Panc1 (cell line): ENCODE measurements at regions of chr10 and their contacts with region 1.

Region 1: GRCh38 chr10:11866199-11866925 is 43.2 kb downstream of the PROSER2 start:
- DNase-seq: no peak
- ATAC-seq: no peak
- H3K4me3 ChIP-seq: no peak overlapping the region
- H3K27ac ChIP-seq: no peak overlapping the region
- H3K4me1 ChIP-seq: no peaks in the 10 kb centered on the region
- H3K27me3 ChIP-seq: no peaks in the 10 kb centered on the region
- CTCF ChIP-seq: no peak

Region 2: DNA sequence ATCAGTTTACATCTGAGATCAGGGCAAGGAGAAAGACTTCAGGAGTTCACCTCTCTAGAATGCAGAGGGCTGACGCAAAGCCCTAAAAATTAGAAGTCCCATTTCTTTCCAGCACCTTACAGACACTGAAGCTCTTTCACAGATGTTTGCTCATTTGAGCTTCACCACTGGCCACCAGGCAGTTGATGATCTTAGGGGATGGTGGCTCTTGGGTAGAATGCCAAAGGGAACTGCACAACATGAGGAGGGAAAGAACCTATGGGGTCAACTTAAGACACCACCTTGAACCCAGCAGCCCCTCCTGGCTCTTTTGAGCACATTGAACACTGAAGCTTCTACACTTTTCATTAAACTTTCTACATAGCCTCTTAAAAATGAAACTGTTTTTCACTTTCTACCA is 1238.9 kb before region 1 on chr10:
- CTCF ChIA-PET with region 1: no interaction called
- POLR2A ChIA-PET with region 1: interaction called, 12 read pairs
- in situ Hi-C with region 1: no loop called
- intact Hi-C with region 1: no loop called
- DNase-seq: no peak
- ATAC-seq: no peak
- H3K4me3 ChIP-seq: no peak overlapping the region
- H3K27ac ChIP-seq: no peak overlapping the region
- H3K4me1 ChIP-seq: no peaks in the 10 kb centered on the region
- H3K27me3 ChIP-seq: no peaks in the 10 kb centered on the region
- CTCF ChIP-seq: no peak

Region 3: GRCh38 chr10:11822031-11822756 is 44.2 kb before region 1 on chr10:
- CTCF ChIA-PET with region 1: no interaction called
- POLR2A ChIA-PET with region 1: no interaction called
- in situ Hi-C with region 1: no loop called
- intact Hi-C with region 1: no loop called
- DNase-seq: no peak
- ATAC-seq: no peak
- H3K4me3 ChIP-seq: no peak overlapping the region
- H3K27ac ChIP-seq: no peak overlapping the region
- H3K4me1 ChIP-seq: 0 out of 2 replicates have a peak, but pooled peaks cover 3% of the 10 kb centered on the region
- H3K27me3 ChIP-seq: peaks cover 2% of the 10 kb centered on the region; the same call in 1 of the 2 replicates
- CTCF ChIP-seq: no peak